AG04449 (cell line): ENCODE measurements at regions of chr10 and their contacts with region 1.

Region 1: DNA sequence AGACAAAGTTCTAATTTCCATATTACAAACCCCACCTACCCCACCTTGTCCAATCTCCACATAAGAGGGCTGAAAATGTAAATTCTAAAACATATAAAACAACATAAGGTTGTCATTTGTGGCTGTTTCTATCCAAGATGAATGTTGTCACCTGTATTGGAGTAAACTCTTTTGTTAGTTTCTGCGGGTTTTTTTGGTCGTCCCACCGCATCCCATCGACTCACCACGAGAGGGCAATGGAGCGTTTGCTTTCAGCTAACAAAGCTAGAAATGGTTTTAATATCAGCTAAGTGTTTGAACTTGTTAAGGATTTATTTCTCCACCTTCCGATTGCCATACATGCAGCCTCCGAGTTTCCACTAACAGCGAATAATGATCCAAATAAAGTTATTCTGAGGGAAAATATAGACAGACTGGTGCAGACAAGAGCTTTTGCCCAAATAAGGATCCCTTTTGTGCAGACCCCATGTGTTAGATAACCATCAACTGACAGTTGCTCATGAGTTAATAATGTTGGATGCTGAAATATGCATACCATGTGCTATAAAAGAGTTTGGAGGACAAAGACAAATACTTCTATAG is 137.2 kb downstream of the ARID5B start:
- DNase-seq: no peak
- H3K4me3 ChIP-seq: peak overlapping the region; percentile 10; the same call in 1 of the 2 replicates
- CTCF ChIP-seq: peak; percentile 78

Region 2: DNA sequence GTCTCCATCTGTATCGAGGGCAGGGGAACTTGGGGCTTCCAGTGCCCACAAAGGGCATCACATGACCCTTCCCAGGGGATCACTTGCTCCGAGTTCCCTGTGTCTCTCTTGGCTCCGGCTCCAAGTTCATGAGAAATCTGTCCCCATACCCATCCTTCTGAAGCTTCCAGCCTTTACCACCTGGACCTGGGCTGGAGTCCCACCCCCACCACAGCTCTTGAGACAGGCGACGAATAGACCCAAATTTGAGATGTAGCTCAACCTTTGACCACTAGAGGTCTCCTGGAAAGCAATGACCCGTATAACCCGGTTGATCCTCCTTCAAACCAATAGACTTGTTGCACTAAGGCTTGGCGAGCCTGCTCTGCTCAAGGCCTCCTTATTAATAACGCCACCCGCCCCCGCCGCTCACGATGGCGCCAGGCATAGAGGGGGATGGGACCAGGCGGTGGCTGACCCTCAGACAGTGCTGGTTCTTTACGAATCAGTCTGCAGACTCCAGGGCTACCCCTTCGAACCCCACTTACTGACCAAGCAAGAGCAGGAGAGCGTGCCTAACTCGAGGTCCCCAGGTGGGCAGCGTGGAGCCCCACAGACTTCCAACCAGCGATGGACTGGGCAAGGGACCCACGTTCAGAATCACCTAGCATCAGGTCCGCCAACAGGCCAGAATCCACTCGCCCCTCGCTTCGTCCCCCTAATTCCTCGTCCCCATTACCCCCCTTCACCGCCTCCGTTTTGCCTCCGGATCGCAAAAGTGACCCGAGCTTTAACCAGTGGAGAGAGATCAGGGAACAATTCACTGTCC is 141.6 kb before region 1 on chr10:
- CTCF ChIA-PET with region 1: interaction called, 14 read pairs
- POLR2A ChIA-PET with region 1: interaction called, 4 read pairs
- DNase-seq: no peak
- H3K4me3 ChIP-seq: peak overlapping the region; percentile 37
- CTCF ChIP-seq: peak; percentile 56

Region 3: DNA sequence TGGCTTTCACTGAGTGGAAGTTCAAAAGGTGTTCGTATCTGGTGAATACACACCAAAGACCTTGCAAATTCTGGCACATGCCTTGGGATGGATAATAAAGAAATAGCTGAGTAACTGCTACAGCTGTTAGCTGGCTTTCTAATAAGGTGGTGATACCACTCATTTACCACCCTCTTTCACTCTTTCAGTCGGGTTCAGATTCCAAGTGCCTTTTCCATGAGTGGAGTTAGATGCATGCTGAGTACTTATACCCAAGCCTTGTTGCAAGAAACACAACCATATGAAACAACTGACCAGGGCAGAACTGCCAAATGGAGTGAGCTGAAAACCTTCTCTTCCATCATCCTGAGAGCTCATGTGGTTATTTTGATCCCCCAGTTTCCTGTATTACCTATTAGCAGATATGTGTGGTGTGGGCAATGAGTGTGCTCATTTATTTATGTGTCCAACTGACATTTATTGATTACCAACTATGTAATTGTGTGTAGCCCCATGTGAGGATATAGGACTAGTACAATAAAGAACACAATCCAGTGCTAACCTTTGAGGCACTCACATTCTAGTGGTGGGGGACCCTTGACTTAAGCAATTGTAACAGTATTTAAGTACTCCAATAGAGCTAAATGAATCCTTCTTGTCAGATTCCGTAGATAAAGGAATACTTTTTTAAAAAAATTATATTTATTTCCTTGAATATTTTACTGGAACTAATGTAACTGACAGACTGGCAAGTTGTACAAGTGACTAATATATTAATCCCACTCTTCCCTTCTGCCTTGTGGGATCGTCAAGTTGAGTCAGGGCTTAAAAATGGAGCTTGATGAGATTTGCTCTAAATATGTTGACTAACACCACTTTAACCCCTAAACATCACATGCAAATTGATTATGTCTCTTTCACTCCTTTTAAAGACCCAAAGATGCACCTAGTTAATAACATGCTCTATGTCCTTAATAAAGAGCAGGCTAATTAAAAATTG is 12.5 kb before region 1 on chr10:
- CTCF ChIA-PET with region 1: interaction called, 17 read pairs
- POLR2A ChIA-PET with region 1: interaction called, 6 read pairs
- DNase-seq: no peak
- H3K4me3 ChIP-seq: no peak overlapping the region
- CTCF ChIP-seq: no peak

Region 4: DNA sequence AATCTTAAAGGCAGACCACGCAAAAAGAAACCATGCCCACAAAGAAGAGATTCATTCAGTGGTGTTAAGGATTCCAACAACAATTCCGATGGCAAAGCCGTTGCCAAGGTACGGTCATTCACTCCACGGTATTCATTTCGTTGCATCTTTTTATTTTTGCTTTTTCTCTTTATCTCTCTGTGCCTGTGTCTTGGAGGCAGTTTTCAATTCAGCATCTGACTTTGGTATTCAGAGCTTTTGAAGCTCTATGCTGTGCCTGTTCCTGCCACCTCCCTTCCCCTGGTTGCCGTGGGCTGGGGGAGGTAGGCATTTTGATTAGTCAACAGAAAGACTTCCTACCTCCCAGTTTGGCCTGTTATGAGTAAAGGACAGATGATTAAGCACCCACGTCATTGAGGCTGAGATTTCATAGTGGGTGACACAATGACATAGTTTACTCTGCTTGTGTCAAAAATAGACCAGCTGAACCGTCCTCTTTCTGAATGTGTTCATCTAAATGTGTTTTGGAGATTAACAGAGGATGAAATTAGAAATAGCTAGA is 12.3 kb after region 1 on chr10:
- CTCF ChIA-PET with region 1: interaction called, 16 read pairs
- POLR2A ChIA-PET with region 1: interaction called, 5 read pairs
- DNase-seq: peak; percentile 80
- H3K4me3 ChIP-seq: peak overlapping the region; percentile 67
- CTCF ChIP-seq: no peak

Region 5: GRCh38 chr10:62073429-62073828 is 34.7 kb after region 1 on chr10:
- CTCF ChIA-PET with region 1: interaction called, 10 read pairs
- POLR2A ChIA-PET with region 1: no interaction called
- DNase-seq: no peak
- H3K4me3 ChIP-seq: no peak overlapping the region
- CTCF ChIP-seq: no peak

Region 6: GRCh38 chr10:62264702-62265436 is 226.2 kb after region 1 on chr10:
- CTCF ChIA-PET with region 1: interaction called, 14 read pairs
- POLR2A ChIA-PET with region 1: no interaction called
- DNase-seq: peak; percentile 69
- H3K4me3 ChIP-seq: no peak overlapping the region
- CTCF ChIP-seq: peak; percentile 55